ENCODE measurements at regions of chr3 and their contacts with region 1.

Region 1: GRCh38 chr3:141894524-141895178 is 18.2 kb downstream of the ATP1B3 start:
- DNase-seq: no peak
- H3K4me3 Mint-ChIP-seq: no peak overlapping the region
- H3K27ac Mint-ChIP-seq: no peak overlapping the region
- H3K4me1 Mint-ChIP-seq: peaks cover 40% of the 10 kb centered on the region
- H3K27me3 Mint-ChIP-seq: no peaks in the 10 kb centered on the region

Region 2: GRCh38 chr3:141905129-141905528 is 10.5 kb after region 1 on chr3:
- intact Hi-C with region 1: loop called (anchors 2 kb)
- DNase-seq: no peak
- H3K4me3 Mint-ChIP-seq: no peak overlapping the region
- H3K27ac Mint-ChIP-seq: peak overlapping the region; percentile 30
- H3K4me1 Mint-ChIP-seq: peaks cover 29% of the 10 kb centered on the region
- H3K27me3 Mint-ChIP-seq: no peaks in the 10 kb centered on the region